ENCODE measurements at regions of chr19 and their contacts with region 1.

Region 1: GRCh38 chr19:53879140-53880081 is 2.6 kb upstream of the PRKCG start:
- DNase-seq: peak; percentile 66 to 88 (median 78)
- ATAC-seq: peak; percentile 83
- H3K4me3 ChIP-seq: peak overlapping the region; percentile 63
- H3K4me3 Mint-ChIP-seq: no peak overlapping the region
- H3K27ac ChIP-seq: peak overlapping the region; percentile 47
- H3K27ac Mint-ChIP-seq: peak overlapping the region in 6 of 9 donors; percentile 56 to 83 (median 68)
- H3K4me1 ChIP-seq: peaks cover 38 to 63% of the 10 kb centered on the region in 2 donors
- H3K4me1 Mint-ChIP-seq: peaks cover 30 to 62% (median 44%) of the 10 kb centered on the region in 7 donors
- H3K27me3 ChIP-seq: peaks cover 0 to 25% of the 10 kb centered on the region in 2 donors
- H3K27me3 Mint-ChIP-seq: peaks cover 10 to 19% (median 17%) of the 10 kb centered on the region in 5 donors

Region 2: DNA sequence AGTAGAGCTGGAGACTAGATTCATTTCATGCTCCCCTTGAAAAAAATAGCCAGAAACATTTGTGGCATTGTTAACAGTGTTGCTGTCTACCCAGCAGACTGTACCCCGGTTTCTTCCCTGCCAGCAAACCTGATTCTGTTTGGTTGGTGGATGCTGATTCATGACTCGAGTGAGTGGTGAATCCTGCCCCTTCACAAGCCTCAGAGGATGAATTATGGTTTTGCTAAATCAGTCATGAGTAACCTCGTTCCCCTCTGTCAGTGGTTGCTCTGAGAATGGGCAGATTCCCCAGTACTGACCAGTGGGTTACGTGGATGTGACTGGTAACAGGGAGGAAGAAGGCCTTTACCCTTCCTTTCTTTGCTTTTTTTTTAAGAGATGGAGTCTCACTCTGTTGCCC is 65.4 kb before region 1 on chr19:
- CTCF ChIA-PET with region 1: no interaction called
- POLR2A ChIA-PET with region 1: no interaction called
- intact Hi-C with region 1: no loop called
- DNase-seq: no peak
- ATAC-seq: no peak
- H3K4me3 ChIP-seq: no peak overlapping the region
- H3K4me3 Mint-ChIP-seq: no peak overlapping the region
- H3K27ac ChIP-seq: no peak overlapping the region
- H3K27ac Mint-ChIP-seq: no peak overlapping the region
- H3K4me1 ChIP-seq: no peaks in the 10 kb centered on the region
- H3K4me1 Mint-ChIP-seq: peaks cover 0 to 1% (median 0%) of the 10 kb centered on the region in 7 donors
- H3K27me3 ChIP-seq: no peaks in the 10 kb centered on the region
- H3K27me3 Mint-ChIP-seq: no peaks in the 10 kb centered on the region

Region 3: DNA sequence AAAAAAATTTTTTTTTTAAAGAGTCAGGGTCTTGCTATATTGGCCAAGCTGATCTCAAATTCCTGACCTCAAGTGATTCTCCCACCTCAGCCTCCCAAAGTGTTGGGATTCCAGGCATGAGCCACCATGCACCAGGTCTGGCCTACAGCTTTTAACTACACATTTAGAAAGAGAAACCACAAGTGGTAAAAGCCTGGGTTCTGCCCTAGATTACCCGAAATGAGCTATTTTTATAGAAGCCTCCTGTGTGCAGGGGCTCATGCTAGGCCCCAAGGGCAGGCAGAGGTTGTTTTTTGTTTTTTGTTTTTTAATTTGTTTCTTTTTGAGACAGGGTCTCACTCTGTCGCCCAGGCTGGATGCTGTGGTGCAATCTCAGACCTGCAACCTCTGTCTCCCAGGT is 25.7 kb before region 1 on chr19:
- CTCF ChIA-PET with region 1: interaction called, 10 read pairs
- POLR2A ChIA-PET with region 1: interaction called, 3 read pairs
- intact Hi-C with region 1: loop called (anchors 1 to 2 kb)
- DNase-seq: no peak
- ATAC-seq: no peak
- H3K4me3 ChIP-seq: no peak overlapping the region
- H3K4me3 Mint-ChIP-seq: no peak overlapping the region
- H3K27ac ChIP-seq: no peak overlapping the region
- H3K27ac Mint-ChIP-seq: no peak overlapping the region
- H3K4me1 ChIP-seq: no peaks in the 10 kb centered on the region
- H3K4me1 Mint-ChIP-seq: peaks cover 0 to 25% (median 2%) of the 10 kb centered on the region in 7 donors
- H3K27me3 ChIP-seq: peaks cover 0 to 4% of the 10 kb centered on the region in 2 donors
- H3K27me3 Mint-ChIP-seq: peaks cover 20 to 33% (median 23%) of the 10 kb centered on the region in 5 donors

Measured in naive thymus-derived CD4-positive, alpha-beta T cell (primary cell).